GM13976 (cell line): ENCODE measurements at regions of chr6 and their contacts with region 1.

Region 1: GRCh38 chr6:100099189-100100074 is 105.4 kb upstream of the MCHR2 start:
- DNase-seq: peak; percentile 28
- CTCF ChIP-seq: peak; percentile 17

Region 2: DNA sequence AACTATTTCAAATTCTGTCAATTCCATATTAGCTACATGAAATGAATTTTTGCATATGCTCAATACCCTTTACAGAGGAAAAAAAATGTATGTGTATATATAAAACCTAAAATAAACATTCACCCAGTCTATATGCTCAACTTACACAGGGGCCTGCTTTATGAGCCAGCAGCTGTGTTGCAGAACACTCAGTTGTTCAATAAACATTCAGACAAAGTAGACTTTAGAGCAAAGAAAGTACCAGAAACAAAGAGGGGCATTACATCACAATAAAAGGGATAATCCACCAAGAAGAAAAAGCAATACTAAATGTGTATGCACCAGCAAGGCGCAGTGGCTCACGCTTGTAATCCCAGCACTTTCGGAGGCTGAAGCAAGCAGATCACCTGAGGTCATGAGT is 714.9 kb before region 1 on chr6:
- in situ Hi-C with region 1: no loop called
- DNase-seq: no peak
- CTCF ChIP-seq: no peak

Region 3: GRCh38 chr6:99868074-99868702 is 231.2 kb before region 1 on chr6:
- in situ Hi-C with region 1: loop called (anchors 25 kb)
- DNase-seq: peak; percentile 46
- CTCF ChIP-seq: peak; percentile 80

Region 4: DNA sequence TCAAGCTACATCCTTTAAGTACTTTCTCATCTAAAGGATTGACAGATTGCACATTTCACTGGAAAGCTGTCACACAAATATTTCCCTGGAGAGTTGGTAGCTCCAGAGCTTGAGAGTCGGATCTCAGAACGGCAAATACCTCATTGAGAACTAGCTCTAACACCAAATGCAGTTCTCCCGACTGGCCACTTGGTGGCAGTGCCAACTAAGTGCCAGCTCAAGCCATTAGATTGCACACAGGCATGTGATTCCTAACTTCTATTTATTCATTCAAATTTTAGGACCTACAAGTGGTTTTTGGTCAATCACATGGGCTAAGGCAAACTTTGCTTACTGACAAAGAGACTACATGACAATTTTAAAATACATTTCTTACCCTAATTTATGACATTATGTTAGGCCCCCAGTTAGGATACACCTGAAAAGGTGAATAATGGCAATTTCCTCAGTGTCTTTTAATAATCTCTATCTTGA is 97.5 kb before region 1 on chr6:
- in situ Hi-C with region 1: loop called (anchors 10 kb)
- DNase-seq: peak; percentile 47
- CTCF ChIP-seq: peak; percentile 90

Region 5: DNA sequence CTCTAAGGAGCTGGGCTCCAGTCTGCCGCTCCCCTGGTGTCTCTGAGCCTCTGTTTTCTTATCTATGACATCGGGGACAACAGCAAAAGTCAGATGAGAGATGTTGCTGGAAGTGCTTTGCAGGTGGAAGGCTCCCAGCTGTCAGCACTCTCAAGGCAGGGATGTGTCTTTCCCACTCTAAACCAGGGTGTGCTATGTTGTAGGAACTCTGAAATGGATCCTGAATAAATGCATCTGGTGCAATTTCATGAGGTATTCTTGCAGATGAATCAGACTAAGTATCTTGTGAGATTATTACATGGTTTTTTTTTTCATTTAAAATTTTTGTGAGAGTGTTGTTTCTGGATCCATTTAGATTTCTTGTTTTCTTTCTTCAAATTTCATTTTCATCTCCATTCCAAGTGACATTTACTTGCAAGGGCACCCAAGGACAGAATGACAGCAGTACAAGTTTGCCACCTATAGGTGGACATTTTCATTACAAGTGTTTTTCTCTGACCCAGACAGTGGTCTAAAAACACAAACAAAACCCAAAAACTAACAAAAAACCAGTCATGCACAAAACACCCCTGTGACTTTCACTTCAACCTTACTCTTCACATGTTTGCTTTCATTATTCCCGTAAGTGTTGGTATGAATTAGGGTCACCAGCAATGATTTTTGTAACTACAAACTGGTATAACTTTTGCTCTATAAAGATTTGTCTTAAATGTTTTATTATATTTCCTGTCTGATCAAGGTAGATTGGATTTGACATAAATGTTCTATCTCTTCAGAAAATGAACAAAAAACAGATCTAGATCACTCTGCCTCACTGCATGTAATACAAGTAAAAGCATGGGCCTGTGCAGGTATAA is 380.0 kb after region 1 on chr6:
- in situ Hi-C with region 1: no loop called
- DNase-seq: peak; percentile 23
- CTCF ChIP-seq: peak; percentile 42